ENCODE measurements at regions of chr9 and their contacts with region 1.

Region 1: GRCh38 chr9:109244157-109245132 is 76.4 kb downstream of the EPB41L4B start:
- DNase-seq: peak; percentile 80
- H3K4me3 Mint-ChIP-seq: no peak overlapping the region
- H3K27ac Mint-ChIP-seq: peak overlapping the region; percentile 42
- H3K4me1 Mint-ChIP-seq: no peaks in the 10 kb centered on the region
- H3K27me3 Mint-ChIP-seq: peaks cover 17% of the 10 kb centered on the region

Region 2: GRCh38 chr9:109320742-109321448 is 76.5 kb after region 1 on chr9 and contains the start of gene EPB41L4B:
- CTCF ChIA-PET with region 1: interaction called, 4 read pairs
- intact Hi-C with region 1: loop called (anchors 1 kb)
- DNase-seq: peak; percentile 95
- H3K4me3 Mint-ChIP-seq: peak within 1 kb of the TSS; percentile 69
- H3K27ac Mint-ChIP-seq: no peak within 1 kb of the TSS
- H3K4me1 Mint-ChIP-seq: peaks cover 10% of the 10 kb centered on the region
- H3K27me3 Mint-ChIP-seq: peaks cover 50% of the 10 kb centered on the region
- total RNA-seq, gene EPB41L4B: 0.24 to 0.25 TPM

Region 3: GRCh38 chr9:109520478-109521132 is 276.2 kb after region 1 on chr9:
- CTCF ChIA-PET with region 1: no interaction called
- intact Hi-C with region 1: loop called (anchors 10 kb)
- DNase-seq: peak; percentile 72
- H3K4me3 Mint-ChIP-seq: no peak overlapping the region
- H3K27ac Mint-ChIP-seq: no peak overlapping the region
- H3K4me1 Mint-ChIP-seq: no peaks in the 10 kb centered on the region
- H3K27me3 Mint-ChIP-seq: peaks cover 10% of the 10 kb centered on the region

Measured in activated naive CD4-positive, alpha-beta T cell treated with anti-CD3 and anti-CD28 coated beads for 36 hours (primary cell).